Dorsolateral prefrontal cortex (tissue), 120 donors: ENCODE measurements at regions of chr10 and their contacts with region 1.

Region 1: GRCh38 chr10:73252445-73253224 is at the start of gene MRPS16:
- DNase-seq: peak; percentile 83 to 98 (median 94)
- H3K4me3 ChIP-seq: peak within 1 kb of the TSS; percentile 62 to 98 (median 91)
- H3K27ac ChIP-seq: peak within 1 kb of the TSS; percentile 35 to 97 (median 91)
- H3K27me3 ChIP-seq: no peaks in the 10 kb centered on the region
- CTCF ChIP-seq: peak in 45 of 56 donors; percentile 13 to 60 (median 34)
- total RNA-seq, gene MRPS16: 44.5 to 85.9 (median 58.6) TPM

Region 2: GRCh38 chr10:73296946-73297345 is 44.3 kb after region 1 on chr10:
- intact Hi-C with region 1: no loop called
- DNase-seq: no peak
- H3K4me3 ChIP-seq: no peak overlapping the region
- H3K27ac ChIP-seq: no peak overlapping the region
- H3K27me3 ChIP-seq: no peaks in the 10 kb centered on the region
- CTCF ChIP-seq: no peak

Region 3: DNA sequence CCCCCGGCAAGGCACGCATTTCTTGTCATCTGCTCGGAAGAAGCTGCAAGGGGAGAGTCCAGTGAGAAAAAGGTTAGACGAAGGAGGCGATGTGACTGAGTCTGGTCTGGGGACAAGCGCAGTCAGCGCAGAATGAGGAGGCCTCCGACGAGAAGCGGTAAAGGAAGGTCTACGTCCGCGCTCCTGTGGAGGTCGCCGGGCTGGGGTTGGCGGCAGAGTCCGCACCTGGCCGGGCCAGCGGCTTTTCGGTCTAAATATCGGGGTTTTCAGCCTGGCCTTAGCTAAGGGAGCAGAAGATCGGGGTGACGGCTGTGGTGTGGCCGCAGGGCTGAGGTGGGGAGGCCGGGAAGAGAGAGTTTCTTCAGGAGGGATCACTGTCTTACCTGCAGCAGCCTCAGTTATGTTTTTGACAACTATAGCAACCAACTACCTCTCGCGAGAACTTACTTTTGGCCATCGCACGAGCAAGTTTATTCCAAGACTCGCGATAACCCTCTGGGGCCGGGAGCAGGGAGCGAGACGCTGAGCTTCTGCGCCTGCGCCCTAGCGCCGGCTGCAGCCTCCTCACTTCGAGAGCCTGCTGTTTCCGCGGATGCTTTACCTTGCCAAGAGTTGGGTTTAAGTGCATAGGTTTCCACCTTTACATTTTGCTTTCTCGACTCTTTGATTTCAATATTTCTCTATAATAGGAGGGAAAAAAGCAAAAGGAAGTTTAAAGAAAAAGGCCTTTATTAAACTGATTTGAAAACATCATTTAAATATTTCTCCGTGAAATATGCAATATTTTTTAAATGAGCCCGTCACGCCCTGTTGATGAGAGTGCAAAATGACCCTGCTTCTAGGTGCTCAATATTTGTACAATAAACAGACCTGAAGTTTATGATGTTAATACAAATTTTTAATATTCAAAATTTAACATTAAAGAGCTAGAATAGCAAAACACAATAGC is 106.0 kb after region 1 on chr10 and contains the start of gene CFAP70:
- intact Hi-C with region 1: loop called in 1 of 2 experiments (anchors 5 kb)
- DNase-seq: peak; percentile 78 to 93 (median 90)
- H3K4me3 ChIP-seq: peak within 1 kb of the TSS; percentile 60 to 96 (median 83)
- H3K27ac ChIP-seq: peak within 1 kb of the TSS in 55 of 59 donors; percentile 11 to 91 (median 77)
- H3K27me3 ChIP-seq: no peaks in the 10 kb centered on the region
- CTCF ChIP-seq: peak in 18 of 56 donors; percentile 5 to 42 (median 23)
- total RNA-seq, gene CFAP70: 4.8 to 20.1 (median 8.8) TPM

Region 4: DNA sequence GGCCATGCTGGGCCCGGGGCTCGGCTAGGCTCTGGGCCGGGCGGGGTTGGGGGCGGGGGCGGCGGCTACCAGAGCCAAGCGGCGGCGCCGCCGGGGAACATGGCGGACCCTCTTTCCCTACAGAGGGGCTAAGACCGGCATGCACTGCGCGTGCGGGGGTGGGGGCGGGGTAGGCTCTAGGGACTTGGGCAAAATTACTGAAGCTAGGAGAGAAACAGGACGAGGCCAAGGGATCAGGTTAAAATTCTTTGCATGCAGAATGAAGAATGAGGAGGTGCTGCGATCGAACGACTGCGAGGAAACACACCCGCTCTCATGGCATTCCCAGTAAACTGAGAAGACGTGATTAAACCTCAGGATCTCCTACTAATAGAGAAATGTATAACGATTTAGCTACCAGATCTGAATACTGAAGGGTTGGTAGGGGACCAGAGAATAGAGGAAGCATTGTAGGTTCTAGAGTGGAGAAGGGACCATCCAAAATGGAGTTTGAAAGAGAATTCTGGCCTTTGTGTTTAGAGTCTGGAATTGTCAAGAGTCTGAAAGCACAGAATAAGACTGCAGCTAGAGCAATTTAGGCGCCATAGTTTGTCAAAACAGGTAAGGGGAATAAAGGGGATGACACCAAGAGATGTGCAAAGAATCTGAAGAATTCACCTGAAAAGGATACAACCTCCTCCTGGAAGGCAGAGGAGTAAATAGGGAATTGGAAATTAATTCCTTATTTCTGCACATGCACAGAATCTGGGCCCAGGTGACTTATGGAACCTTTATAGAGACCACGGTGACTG is 243.4 kb after region 1 on chr10 and contains the start of gene PPP3CB:
- intact Hi-C with region 1: loop called in 1 of 2 experiments (anchors 10 kb)
- DNase-seq: peak; percentile 71 to 86 (median 80)
- H3K4me3 ChIP-seq: peak within 1 kb of the TSS; percentile 54 to 100 (median 92)
- H3K27ac ChIP-seq: peak within 1 kb of the TSS; percentile 78 to 98 (median 94)
- H3K27me3 ChIP-seq: no peaks in the 10 kb centered on the region
- CTCF ChIP-seq: peak in 2 of 56 donors; percentile 11 to 27
- total RNA-seq, gene PPP3CB: 64.9 to 242 (median 161) TPM